Mammary epithelial cell (primary cell): ENCODE measurements at regions of chr20 and their contacts with region 1.

Region 1: DNA sequence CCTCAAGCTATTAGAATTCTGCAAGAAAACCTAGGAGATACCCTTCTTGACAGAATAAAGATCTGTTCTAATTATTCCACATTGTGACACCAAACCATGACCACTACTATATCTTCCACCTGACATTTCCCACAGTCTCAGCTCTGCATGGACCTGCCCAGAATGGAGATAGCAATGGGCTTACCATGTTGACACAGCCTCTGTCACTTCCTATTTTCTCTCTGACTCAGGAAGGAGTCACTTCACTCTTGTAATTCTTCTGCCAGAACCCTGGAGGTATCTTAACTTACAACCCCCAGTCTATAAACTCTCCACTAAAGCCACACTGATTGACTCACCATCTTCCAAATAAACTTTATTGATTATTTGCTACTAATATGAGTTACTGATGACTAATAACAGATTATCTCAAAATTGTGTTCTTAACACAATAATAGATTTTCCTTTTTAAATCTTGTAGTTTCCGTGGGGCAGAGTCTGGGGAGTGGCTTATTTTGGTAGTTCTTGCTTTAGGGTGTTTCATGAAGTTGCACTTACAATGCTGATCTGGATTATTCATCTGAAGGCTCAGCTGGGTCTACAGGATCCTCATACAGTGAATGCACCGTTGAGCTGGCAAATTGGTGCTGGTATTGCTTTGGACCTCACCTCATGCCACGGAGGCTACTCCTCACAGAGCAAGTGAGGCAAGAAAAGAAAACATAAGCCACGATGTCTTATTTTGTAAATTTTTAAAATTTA is 869.9 kb downstream of the KIF16B start:
- DNase-seq: peak; percentile 96
- H3K4me3 ChIP-seq: no peak overlapping the region
- H3K27ac ChIP-seq: peak overlapping the region; percentile 51
- H3K4me1 ChIP-seq: peaks cover 44% of the 10 kb centered on the region
- H3K27me3 ChIP-seq: no peaks in the 10 kb centered on the region
- CTCF ChIP-seq: no peak

Region 2: DNA sequence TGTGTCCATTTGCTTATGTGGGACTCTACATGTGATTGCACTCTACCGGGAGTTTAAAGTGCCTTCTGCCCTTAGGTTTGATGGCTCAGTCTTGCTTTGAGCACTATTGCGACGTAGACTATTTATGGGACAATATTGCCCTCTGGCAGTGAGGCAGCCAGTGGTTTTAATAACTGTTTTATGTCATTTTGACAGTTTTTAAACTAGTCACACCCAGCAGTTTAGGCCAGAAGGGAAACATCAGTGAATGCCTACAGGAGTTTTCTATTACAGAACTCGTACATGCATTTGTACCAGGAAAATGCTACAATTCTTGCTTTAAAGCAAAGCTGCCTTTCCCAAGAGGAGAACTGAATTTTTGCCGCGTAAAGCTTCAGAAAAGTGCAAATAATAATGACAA is 56.3 kb after region 1 on chr20:
- CTCF ChIA-PET with region 1: no interaction called
- dilution Hi-C with region 1: no loop called
- in situ Hi-C with region 1: no loop called
- intact Hi-C with region 1: loop called (anchors 5 kb)
- DNase-seq: no peak
- H3K4me3 ChIP-seq: no peak overlapping the region
- H3K27ac ChIP-seq: no peak overlapping the region
- H3K4me1 ChIP-seq: no peaks in the 10 kb centered on the region
- H3K27me3 ChIP-seq: no peaks in the 10 kb centered on the region
- CTCF ChIP-seq: peak in 1 of 2 donors; percentile 18